Activated CD4-positive, alpha-beta T cell treated with anti-CD3 and anti-CD28 coated beads, Interleukin-2, amount 10 ng/mL, durations not matched to agents 24 days and 14 days (primary cell): ENCODE measurements at regions of chr6 and their contacts with region 1.

Region 1: DNA sequence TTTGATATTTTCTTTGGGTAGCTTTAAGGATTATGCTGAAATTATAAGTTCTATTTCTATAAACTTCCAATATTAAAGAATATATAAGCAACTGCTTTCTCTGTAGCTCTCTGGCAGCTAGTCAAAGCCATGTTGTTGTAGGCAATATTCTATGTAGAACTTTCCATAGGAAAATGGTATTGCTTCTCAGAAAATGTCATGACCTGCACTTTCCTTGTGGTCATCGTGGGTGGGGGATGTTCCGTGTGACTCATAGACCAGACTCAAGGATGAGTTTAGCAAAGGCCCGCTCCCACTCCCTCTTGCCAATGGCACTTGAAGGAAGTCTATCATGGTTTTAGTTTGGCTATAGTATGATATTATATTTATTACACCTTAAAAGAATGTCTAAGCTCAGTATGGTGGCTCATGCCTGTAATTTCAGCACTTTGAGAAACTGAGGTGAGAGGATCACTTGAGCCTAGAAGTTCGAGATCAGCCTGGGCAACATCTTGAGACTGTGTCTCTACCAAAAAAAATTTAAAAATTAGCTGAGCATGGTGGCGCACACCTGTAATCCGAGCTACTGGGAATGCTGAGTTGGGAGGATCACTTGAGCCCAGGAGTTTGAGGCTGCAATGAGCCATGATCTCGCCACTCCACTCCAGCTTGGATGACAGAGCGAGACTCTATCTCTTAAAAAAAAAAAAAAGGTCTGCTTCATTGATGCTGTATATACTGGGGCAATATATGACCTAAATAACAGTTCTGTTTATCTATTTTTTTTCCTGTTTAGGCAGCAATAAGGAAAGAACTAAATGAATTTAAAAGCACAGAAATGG is 36.6 kb upstream of the LTV1 start:
- DNase-seq: peak; percentile 84
- H3K4me3 Mint-ChIP-seq: peak overlapping the region; percentile 62
- H3K27ac Mint-ChIP-seq: peak overlapping the region; percentile 91
- H3K4me1 Mint-ChIP-seq: peaks cover 46% of the 10 kb centered on the region
- H3K27me3 Mint-ChIP-seq: peaks cover 2% of the 10 kb centered on the region

Region 2: GRCh38 chr6:143536865-143537691 is 269.4 kb before region 1 on chr6:
- intact Hi-C with region 1: loop called (anchors 5 kb)
- DNase-seq: peak; percentile 90
- H3K4me3 Mint-ChIP-seq: peak overlapping the region; percentile 88
- H3K27ac Mint-ChIP-seq: peak overlapping the region; percentile 76
- H3K4me1 Mint-ChIP-seq: peaks cover 37% of the 10 kb centered on the region
- H3K27me3 Mint-ChIP-seq: no peaks in the 10 kb centered on the region

Region 3: GRCh38 chr6:143647191-143647590 is 159.3 kb before region 1 on chr6:
- intact Hi-C with region 1: loop called (anchors 1 kb)
- DNase-seq: no peak
- H3K4me3 Mint-ChIP-seq: peak overlapping the region; percentile 19
- H3K27ac Mint-ChIP-seq: peak overlapping the region; percentile 78
- H3K4me1 Mint-ChIP-seq: peaks cover 22% of the 10 kb centered on the region
- H3K27me3 Mint-ChIP-seq: no peaks in the 10 kb centered on the region

Region 4: DNA sequence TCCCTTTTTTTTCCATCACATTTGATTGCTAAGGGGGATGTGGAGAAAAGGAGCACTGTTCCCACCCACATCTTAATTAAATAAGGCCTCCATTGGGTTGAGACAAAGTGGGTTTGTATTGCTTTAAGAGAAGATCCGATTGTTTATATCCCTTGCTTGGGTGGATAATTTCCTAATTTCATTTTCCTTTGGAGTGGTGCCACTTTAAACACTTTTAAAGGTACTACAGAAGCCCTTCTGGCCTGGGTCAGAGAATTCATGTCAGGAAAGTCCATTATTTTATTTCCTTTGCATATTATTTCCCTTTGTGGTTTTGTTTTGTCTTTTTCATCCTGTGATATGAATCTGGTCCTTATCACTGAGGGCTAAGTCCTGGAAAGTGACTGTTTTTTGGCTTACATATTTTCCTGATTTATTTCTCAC is 71.8 kb before region 1 on chr6:
- intact Hi-C with region 1: loop called (anchors 2 kb)
- DNase-seq: no peak
- H3K4me3 Mint-ChIP-seq: no peak overlapping the region
- H3K27ac Mint-ChIP-seq: no peak overlapping the region
- H3K4me1 Mint-ChIP-seq: peaks cover 38% of the 10 kb centered on the region
- H3K27me3 Mint-ChIP-seq: no peaks in the 10 kb centered on the region

Region 5: DNA sequence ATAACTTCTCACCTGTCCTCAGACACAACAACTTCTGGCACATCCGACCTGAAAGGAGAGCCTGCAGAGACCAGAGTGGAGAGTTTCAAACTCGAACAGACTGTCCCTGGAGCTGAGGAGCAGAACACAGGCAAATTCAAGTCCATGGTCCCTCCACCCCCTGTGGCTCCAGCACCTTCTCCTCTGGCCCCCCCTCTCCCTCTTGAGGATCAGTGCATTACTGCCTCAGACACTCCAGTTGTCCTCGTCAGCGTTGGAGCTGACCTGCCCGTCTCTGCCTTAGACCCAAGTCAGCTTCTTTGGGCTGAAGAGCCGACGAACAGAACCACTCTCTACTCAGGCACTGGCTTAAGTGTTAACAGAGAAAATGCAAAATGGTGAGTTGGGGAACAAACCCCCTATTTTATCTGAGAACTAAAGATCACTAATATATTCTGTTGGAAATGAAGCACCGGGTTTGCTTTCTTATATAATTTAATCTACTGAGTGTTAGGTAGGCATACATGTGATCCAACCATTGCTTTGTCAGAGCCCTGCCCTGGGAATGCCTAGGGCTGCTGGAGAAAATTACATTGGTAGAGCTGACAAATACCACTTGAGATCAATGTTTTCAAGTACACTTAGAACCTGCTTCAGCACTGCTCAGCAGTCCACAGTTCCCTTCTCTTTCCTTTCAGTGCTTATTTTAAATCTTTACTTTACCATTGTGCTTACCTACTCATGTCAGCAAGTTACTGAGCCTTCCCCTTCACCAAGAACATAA is 40.9 kb before region 1 on chr6:
- intact Hi-C with region 1: no loop called
- DNase-seq: no peak
- H3K4me3 Mint-ChIP-seq: no peak overlapping the region
- H3K27ac Mint-ChIP-seq: no peak overlapping the region
- H3K4me1 Mint-ChIP-seq: no peaks in the 10 kb centered on the region
- H3K27me3 Mint-ChIP-seq: no peaks in the 10 kb centered on the region

Region 6: DNA sequence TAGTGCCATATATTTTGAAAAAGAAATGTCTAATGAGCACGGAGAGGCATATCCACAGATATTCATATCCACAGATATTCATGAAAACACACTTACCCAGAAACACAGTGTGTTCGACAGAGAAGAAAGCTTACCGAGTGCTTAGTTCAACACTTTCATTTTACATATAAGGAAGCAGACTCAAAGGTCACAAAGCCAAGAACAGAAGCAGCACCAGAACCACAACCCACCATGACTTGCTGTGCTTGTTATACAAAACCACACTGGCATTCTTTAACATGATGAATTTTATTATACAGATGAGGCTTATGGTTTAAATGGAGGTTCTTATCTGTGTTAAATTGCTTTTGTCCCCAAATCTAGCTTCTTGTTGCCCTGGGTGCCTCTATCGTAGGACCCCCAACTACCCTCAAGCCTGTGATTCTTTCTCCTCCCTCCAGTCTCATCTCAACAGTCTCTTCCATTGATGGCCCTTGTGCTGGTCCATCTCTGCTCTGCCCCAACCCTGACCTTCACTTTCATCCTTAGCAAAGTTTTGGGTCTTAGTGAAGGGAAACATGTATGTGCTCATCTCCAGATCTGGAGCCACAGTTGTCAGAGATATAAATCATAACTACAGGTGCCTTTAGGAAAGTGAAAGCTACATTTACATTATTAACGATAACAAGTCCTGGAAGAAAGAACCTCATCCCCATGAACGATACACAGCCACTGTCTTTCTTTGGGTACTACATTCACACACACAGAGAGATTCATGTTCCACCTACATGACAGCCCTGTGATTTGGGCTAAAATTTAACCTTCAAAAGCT is 248.8 kb after region 1 on chr6:
- intact Hi-C with region 1: loop called (anchors 1 kb)
- DNase-seq: peak; percentile 86
- H3K4me3 Mint-ChIP-seq: peak overlapping the region; percentile 78
- H3K27ac Mint-ChIP-seq: peak overlapping the region; percentile 94
- H3K4me1 Mint-ChIP-seq: peaks cover 27% of the 10 kb centered on the region
- H3K27me3 Mint-ChIP-seq: no peaks in the 10 kb centered on the region